Panc1 (cell line): ENCODE measurements at regions of chr12 and their contacts with region 1.

Region 1: GRCh38 chr12:26119391-26119981 is 5.4 kb downstream of the BHLHE41 start:
- DNase-seq: no peak
- ATAC-seq: peak; percentile 36
- H3K4me3 ChIP-seq: no peak overlapping the region
- H3K27ac ChIP-seq: peak overlapping the region; percentile 100
- H3K4me1 ChIP-seq: peaks cover 77% of the 10 kb centered on the region
- H3K27me3 ChIP-seq: no peaks in the 10 kb centered on the region
- CTCF ChIP-seq: peak; percentile 89

Region 2: GRCh38 chr12:25960143-25960542 is 159.3 kb before region 1 on chr12:
- CTCF ChIA-PET with region 1: no interaction called
- POLR2A ChIA-PET with region 1: interaction called, 10 read pairs
- in situ Hi-C with region 1: no loop called
- intact Hi-C with region 1: no loop called
- DNase-seq: no peak
- ATAC-seq: no peak
- H3K4me3 ChIP-seq: peak overlapping the region; percentile 76 to 91
- H3K27ac ChIP-seq: peak overlapping the region; percentile 91
- H3K4me1 ChIP-seq: peaks cover 38% of the 10 kb centered on the region
- H3K27me3 ChIP-seq: no peaks in the 10 kb centered on the region
- CTCF ChIP-seq: peak; percentile 83

Region 3: GRCh38 chr12:26493656-26494055 is 374.2 kb after region 1 on chr12:
- CTCF ChIA-PET with region 1: no interaction called
- POLR2A ChIA-PET with region 1: no interaction called
- in situ Hi-C with region 1: no loop called
- intact Hi-C with region 1: no loop called
- DNase-seq: no peak
- ATAC-seq: no peak
- H3K4me3 ChIP-seq: no peak overlapping the region
- H3K27ac ChIP-seq: no peak overlapping the region
- H3K4me1 ChIP-seq: no peaks in the 10 kb centered on the region
- H3K27me3 ChIP-seq: no peaks in the 10 kb centered on the region
- CTCF ChIP-seq: no peak

Region 4: GRCh38 chr12:26523708-26524150 is 404.2 kb after region 1 on chr12:
- CTCF ChIA-PET with region 1: interaction called, 16 read pairs
- POLR2A ChIA-PET with region 1: interaction called, 11 read pairs
- in situ Hi-C with region 1: no loop called
- intact Hi-C with region 1: loop called (anchors 5 kb)
- DNase-seq: no peak
- ATAC-seq: peak; percentile 56
- H3K4me3 ChIP-seq: no peak overlapping the region
- H3K27ac ChIP-seq: peak overlapping the region; percentile 51
- H3K4me1 ChIP-seq: peaks cover 7% of the 10 kb centered on the region
- H3K27me3 ChIP-seq: no peaks in the 10 kb centered on the region
- CTCF ChIP-seq: no peak

Region 5: DNA sequence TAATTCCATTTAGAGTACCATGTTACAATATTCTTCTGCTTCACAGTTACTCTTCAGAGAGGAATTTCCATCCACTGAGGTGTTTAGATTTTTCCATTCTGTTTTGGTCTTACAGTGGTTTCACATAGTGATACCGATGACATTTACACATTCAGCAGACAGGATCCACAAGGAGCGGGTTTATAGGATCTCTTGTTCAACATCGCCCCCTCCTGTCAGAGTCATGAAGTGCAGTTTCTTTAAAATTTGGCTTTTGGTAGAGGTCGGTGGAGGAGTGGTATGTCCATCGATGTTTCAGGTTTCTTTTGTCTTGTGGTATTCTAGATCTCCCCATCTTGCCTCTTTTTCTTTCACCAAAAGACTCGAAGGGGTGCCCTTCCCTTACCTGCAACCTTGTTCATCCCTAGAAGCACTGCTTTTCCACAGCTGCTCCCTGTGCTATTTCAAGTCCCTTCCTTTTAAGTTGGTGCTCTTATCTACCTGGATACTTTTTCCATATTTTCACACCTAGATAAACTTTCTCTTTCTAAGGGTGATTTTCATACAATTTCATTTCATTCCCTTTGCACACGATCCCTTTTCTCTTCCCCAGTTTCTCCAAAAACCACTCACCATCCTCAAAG is 532.2 kb after region 1 on chr12:
- CTCF ChIA-PET with region 1: interaction called, 18 read pairs
- POLR2A ChIA-PET with region 1: no interaction called
- in situ Hi-C with region 1: no loop called
- intact Hi-C with region 1: loop called (anchors 2 kb)
- DNase-seq: peak; percentile 77
- ATAC-seq: peak; percentile 82
- H3K4me3 ChIP-seq: no peak overlapping the region
- H3K27ac ChIP-seq: peak overlapping the region; percentile 5
- H3K4me1 ChIP-seq: no peaks in the 10 kb centered on the region
- H3K27me3 ChIP-seq: no peaks in the 10 kb centered on the region
- CTCF ChIP-seq: peak; percentile 87

Region 6: GRCh38 chr12:26853303-26854030 is 734.0 kb after region 1 on chr12:
- CTCF ChIA-PET with region 1: no interaction called
- POLR2A ChIA-PET with region 1: interaction called, 13 read pairs
- in situ Hi-C with region 1: no loop called
- intact Hi-C with region 1: no loop called
- DNase-seq: no peak
- ATAC-seq: peak; percentile 95
- H3K4me3 ChIP-seq: 0 out of 4 replicates have a peak overlapping the region, but pooled peaks of 1 of the 2 experiments have one; percentile 12
- H3K27ac ChIP-seq: no peak overlapping the region
- H3K4me1 ChIP-seq: peaks cover 3% of the 10 kb centered on the region; the same call in 1 of the 2 replicates
- H3K27me3 ChIP-seq: no peaks in the 10 kb centered on the region; the same call in 1 of the 2 replicates
- CTCF ChIP-seq: peak; percentile 97